ENCODE measurements at regions of chr6 and their contacts with region 1.

Region 1: GRCh38 chr6:106085984-106086813 is at the start of gene PRDM1:
- DNase-seq: peak; percentile 98
- H3K4me3 ChIP-seq: peak within 1 kb of the TSS; percentile 34 to 74 (median 46)
- H3K27ac ChIP-seq: peak within 1 kb of the TSS; percentile 55 to 90 (median 80)
- H3K4me1 ChIP-seq: peaks cover 22 to 81% (median 69%) of the 10 kb centered on the region in 6 donors
- H3K27me3 ChIP-seq: peaks cover 0 to 31% (median 0%) of the 10 kb centered on the region in 7 donors
- CTCF ChIP-seq: peak in 6 of 11 experiments; percentile 30 to 56 (median 36)
- POLR2A ChIP-seq: peak; percentile 50 to 76 (median 54)
- total RNA-seq, gene PRDM1: 35.7 to 63.7 (median 45.4) TPM

Region 2: GRCh38 chr6:105992315-105992961 is 93.8 kb before region 1 on chr6:
- intact Hi-C with region 1: loop called (anchors 10 kb)
- DNase-seq: peak; percentile 96
- H3K4me3 ChIP-seq: peak overlapping the region; percentile 52 to 89 (median 70)
- H3K27ac ChIP-seq: peak overlapping the region; percentile 51 to 87 (median 81)
- H3K4me1 ChIP-seq: peaks cover 12 to 44% (median 30%) of the 10 kb centered on the region in 6 donors
- H3K27me3 ChIP-seq: peaks cover 0 to 74% (median 20%) of the 10 kb centered on the region in 7 donors
- CTCF ChIP-seq: peak in 6 of 11 experiments; percentile 12 to 70 (median 44)
- POLR2A ChIP-seq: no peak